Left ventricle myocardium superior (tissue), 1 donor: ENCODE measurements at regions of chr6 and their contacts with region 1.

Region 1: GRCh38 chr6:30721198-30722024 is 1.3 kb downstream of the TUBB start:
- DNase-seq: peak; percentile 96
- ATAC-seq: peak; percentile 76

Region 2: GRCh38 chr6:30678964-30679726 is 42.3 kb before region 1 on chr6:
- intact Hi-C with region 1: loop called (anchors 2 kb)
- DNase-seq: peak; percentile 93
- ATAC-seq: peak; percentile 78